Naive thymus-derived CD4-positive, alpha-beta T cell (primary cell): ENCODE measurements at regions of chr1 and their contacts with region 1.

Region 1: DNA sequence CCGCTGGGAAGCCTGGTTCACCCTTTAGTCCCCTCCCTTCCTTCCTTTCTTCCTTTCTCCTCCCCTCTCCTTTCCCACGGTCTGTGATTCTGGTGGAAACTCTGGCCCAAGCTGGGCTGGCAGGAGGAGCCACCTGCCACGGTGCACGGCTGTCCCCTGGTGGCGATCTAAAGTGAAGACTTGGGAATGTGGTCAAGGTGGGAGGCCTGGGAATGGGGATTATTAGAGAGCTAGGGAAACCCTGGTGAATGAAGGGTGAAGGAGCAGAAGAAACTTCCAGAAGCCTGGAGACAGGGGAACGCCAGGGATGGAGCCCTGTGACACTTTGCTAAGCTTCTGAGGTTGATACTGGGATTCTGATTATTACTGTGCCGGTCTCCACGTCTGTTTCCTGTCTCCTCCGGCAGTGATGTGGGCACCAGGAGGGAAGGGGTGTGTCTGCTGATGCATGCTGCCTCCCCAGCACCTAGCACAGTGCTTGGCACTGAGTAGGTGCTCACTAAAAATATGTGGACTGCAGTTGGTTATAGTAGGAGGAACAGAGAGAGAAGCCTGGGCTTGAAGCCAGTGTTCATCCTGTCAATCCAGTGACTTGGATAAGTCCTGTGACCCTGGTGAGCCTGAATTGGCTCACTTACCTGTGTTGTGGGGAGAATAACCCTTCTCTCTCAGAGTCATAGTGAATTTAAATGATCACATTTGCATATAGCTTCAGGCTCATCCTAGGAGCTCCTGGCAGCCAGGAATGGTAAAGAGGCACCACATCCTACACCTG is 71.2 kb upstream of the NBPF3 start:
- DNase-seq: peak; percentile 16 to 69 (median 50)
- ATAC-seq: peak; percentile 83
- H3K4me3 ChIP-seq: no peak overlapping the region
- H3K4me3 Mint-ChIP-seq: peak overlapping the region in 1 of 10 donors; percentile 15
- H3K27ac ChIP-seq: no peak overlapping the region
- H3K27ac Mint-ChIP-seq: peak overlapping the region in 4 of 9 donors; percentile 7 to 63 (median 51)
- H3K4me1 ChIP-seq: peaks cover 0 to 3% of the 10 kb centered on the region in 2 donors
- H3K4me1 Mint-ChIP-seq: peaks cover 6 to 16% (median 7%) of the 10 kb centered on the region in 7 donors
- H3K27me3 ChIP-seq: no peaks in the 10 kb centered on the region
- H3K27me3 Mint-ChIP-seq: peaks cover 0 to 3% (median 0%) of the 10 kb centered on the region in 5 donors

Region 2: GRCh38 chr1:21216835-21217811 is 151.6 kb before region 1 on chr1:
- CTCF ChIA-PET with region 1: interaction called, 19 read pairs
- POLR2A ChIA-PET with region 1: no interaction called
- intact Hi-C with region 1: loop called (anchors 1 kb)
- DNase-seq: peak; percentile 37 to 66 (median 60)
- ATAC-seq: peak; percentile 82
- H3K4me3 ChIP-seq: no peak overlapping the region
- H3K4me3 Mint-ChIP-seq: no peak overlapping the region
- H3K27ac ChIP-seq: no peak overlapping the region
- H3K27ac Mint-ChIP-seq: peak overlapping the region in 8 of 9 donors; percentile 30 to 93 (median 70)
- H3K4me1 ChIP-seq: no peaks in the 10 kb centered on the region
- H3K4me1 Mint-ChIP-seq: peaks cover 0 to 8% (median 6%) of the 10 kb centered on the region in 7 donors
- H3K27me3 ChIP-seq: no peaks in the 10 kb centered on the region
- H3K27me3 Mint-ChIP-seq: no peaks in the 10 kb centered on the region

Region 3: DNA sequence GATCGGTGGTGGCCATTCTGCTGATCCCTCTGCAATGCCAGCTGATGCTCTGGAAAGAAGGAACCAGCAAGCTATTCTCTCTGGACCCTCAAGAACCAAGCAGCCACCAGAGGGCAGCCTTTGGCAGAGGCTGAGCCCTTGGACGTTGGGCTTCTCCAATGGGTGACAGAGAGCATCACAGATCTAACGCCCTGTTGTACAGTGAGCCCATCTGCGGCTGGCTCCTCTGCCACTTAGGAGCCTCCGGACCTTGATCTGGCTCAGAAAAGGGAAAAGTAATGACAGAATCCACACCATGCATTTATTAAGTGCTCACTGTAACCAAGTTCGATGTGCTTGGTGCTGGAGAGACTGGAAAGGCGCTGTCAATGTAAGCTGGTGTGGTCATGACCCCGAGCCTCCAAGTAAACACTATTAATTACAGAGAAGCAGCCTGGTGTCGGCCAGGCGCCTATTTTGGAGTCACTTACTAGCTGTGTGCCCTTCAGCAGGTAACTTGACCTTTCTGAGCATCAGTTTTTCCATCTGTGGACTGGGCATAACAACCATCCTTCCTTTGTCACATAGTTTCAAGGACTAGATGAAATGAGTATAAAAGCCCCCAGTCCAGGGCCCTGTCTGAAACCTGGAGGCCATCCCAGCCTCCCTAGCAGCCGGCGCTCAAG is 113.3 kb before region 1 on chr1:
- CTCF ChIA-PET with region 1: interaction called, 231 read pairs
- POLR2A ChIA-PET with region 1: interaction called, 12 read pairs
- intact Hi-C with region 1: loop called (anchors 1 kb)
- DNase-seq: peak; percentile 67 to 82 (median 75)
- ATAC-seq: peak; percentile 92
- H3K4me3 ChIP-seq: no peak overlapping the region
- H3K4me3 Mint-ChIP-seq: no peak overlapping the region
- H3K27ac ChIP-seq: no peak overlapping the region
- H3K27ac Mint-ChIP-seq: peak overlapping the region in 6 of 9 donors; percentile 13 to 87 (median 71)
- H3K4me1 ChIP-seq: peaks cover 4 to 16% of the 10 kb centered on the region in 2 donors
- H3K4me1 Mint-ChIP-seq: peaks cover 15 to 35% (median 28%) of the 10 kb centered on the region in 7 donors
- H3K27me3 ChIP-seq: no peaks in the 10 kb centered on the region
- H3K27me3 Mint-ChIP-seq: no peaks in the 10 kb centered on the region

Region 4: DNA sequence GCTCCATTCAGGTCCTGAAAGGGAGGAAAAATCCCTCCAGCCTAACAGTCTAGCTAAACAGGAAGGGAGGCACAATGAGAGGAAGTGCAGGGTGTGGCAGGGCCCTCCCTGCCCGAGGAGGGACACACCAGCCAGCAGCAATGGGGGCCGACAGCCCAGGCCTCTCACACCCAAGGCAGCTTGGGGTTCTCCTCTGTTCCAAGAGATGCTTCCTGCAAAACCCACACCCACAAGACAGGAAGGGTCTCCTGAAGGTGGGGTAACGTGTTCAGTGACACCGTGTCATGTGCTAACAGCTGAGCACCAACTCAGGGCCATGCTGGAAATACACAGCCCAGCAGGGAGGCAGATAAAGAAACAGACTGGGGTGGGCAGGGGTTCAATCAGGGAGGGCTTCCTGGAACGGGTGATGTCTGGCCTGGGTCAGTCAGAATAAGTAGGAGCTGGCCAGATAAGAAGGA is 88.7 kb before region 1 on chr1:
- CTCF ChIA-PET with region 1: interaction called, 14 read pairs
- POLR2A ChIA-PET with region 1: no interaction called
- intact Hi-C with region 1: no loop called
- DNase-seq: peak in 4 of 9 donors; percentile 15 to 22 (median 18)
- ATAC-seq: peak; percentile 68
- H3K4me3 ChIP-seq: peak overlapping the region; percentile 21
- H3K4me3 Mint-ChIP-seq: peak overlapping the region; percentile 61 to 82 (median 75)
- H3K27ac ChIP-seq: peak overlapping the region; percentile 66
- H3K27ac Mint-ChIP-seq: peak overlapping the region; percentile 93 to 99 (median 95)
- H3K4me1 ChIP-seq: peaks cover 34 to 37% of the 10 kb centered on the region in 2 donors
- H3K4me1 Mint-ChIP-seq: peaks cover 29 to 61% (median 54%) of the 10 kb centered on the region in 7 donors
- H3K27me3 ChIP-seq: no peaks in the 10 kb centered on the region
- H3K27me3 Mint-ChIP-seq: no peaks in the 10 kb centered on the region

Region 5: DNA sequence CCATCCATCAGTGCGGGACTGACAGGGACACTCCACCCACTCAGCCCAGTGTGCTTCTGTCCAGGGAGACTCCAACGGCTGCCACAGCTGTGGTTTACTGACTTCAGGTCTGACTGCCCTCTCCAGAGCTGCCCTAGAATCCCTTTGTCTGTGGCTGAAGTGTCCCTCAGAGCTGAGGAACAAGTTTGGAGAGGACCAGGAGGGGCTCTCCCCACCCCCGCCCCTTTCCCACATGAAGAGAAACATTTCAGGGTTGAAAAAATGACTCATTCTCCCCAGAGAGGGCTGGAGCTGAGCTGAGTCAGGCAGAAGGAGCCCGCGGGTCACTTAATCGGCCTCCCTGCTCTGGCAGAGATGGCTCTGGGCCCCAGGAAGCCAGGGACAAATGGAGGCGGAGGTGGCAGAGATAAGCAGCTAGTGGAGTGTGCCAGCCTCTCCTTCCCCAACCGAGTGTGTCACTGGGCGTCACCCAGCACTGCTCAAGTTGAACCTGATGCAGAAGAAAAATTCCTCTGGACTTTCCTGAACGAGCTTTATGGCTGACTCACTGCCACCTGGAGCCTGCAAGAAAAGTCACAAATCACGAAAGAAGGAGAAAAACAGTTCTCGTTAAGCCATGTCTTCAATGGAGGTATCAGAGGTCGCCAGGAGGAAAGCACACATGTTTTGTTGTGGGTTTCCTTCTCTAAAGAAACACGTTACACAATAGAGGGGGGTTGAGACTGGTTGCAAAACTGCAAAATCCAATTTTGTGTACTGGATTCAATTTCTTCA is 44.1 kb before region 1 on chr1:
- CTCF ChIA-PET with region 1: interaction called, 10 read pairs
- POLR2A ChIA-PET with region 1: interaction called, 4 read pairs
- intact Hi-C with region 1: no loop called
- DNase-seq: peak in 8 of 9 donors; percentile 42 to 78 (median 56)
- ATAC-seq: peak; percentile 70
- H3K4me3 ChIP-seq: peak overlapping the region; percentile 25
- H3K4me3 Mint-ChIP-seq: peak overlapping the region; percentile 72 to 88 (median 84)
- H3K27ac ChIP-seq: peak overlapping the region; percentile 75
- H3K27ac Mint-ChIP-seq: peak overlapping the region; percentile 85 to 97 (median 95)
- H3K4me1 ChIP-seq: peaks cover 38 to 60% of the 10 kb centered on the region in 2 donors
- H3K4me1 Mint-ChIP-seq: peaks cover 43 to 99% (median 83%) of the 10 kb centered on the region in 7 donors
- H3K27me3 ChIP-seq: no peaks in the 10 kb centered on the region
- H3K27me3 Mint-ChIP-seq: no peaks in the 10 kb centered on the region

Region 6: GRCh38 chr1:21344750-21345443 is 23.8 kb before region 1 on chr1:
- CTCF ChIA-PET with region 1: interaction called, 12 read pairs
- POLR2A ChIA-PET with region 1: interaction called, 3 read pairs
- intact Hi-C with region 1: loop called in 1 of 2 experiments (anchors 1 kb)
- DNase-seq: no peak
- ATAC-seq: peak; percentile 33
- H3K4me3 ChIP-seq: peak overlapping the region; percentile 59
- H3K4me3 Mint-ChIP-seq: peak overlapping the region in 8 of 10 donors; percentile 85 to 92 (median 90)
- H3K27ac ChIP-seq: peak overlapping the region; percentile 72
- H3K27ac Mint-ChIP-seq: peak overlapping the region; percentile 47 to 94 (median 88)
- H3K4me1 ChIP-seq: peaks cover 23 to 45% of the 10 kb centered on the region in 2 donors
- H3K4me1 Mint-ChIP-seq: peaks cover 30 to 44% (median 44%) of the 10 kb centered on the region in 7 donors
- H3K27me3 ChIP-seq: no peaks in the 10 kb centered on the region
- H3K27me3 Mint-ChIP-seq: no peaks in the 10 kb centered on the region